Ascending aorta (tissue), 2 donors: ENCODE measurements at regions of chr1 and their contacts with region 1.

Region 1: GRCh38 chr1:16155532-16156410 is at the start of gene EPHA2:
- DNase-seq: peak; percentile 71 to 96
- H3K4me3 ChIP-seq: peak within 1 kb of the TSS; percentile 75 to 90
- H3K27ac ChIP-seq: peak within 1 kb of the TSS; percentile 84 to 91
- H3K4me1 ChIP-seq: peaks cover 12 to 41% of the 10 kb centered on the region in 2 donors
- H3K27me3 ChIP-seq: no peaks in the 10 kb centered on the region
- CTCF ChIP-seq: peak in 1 of 3 experiments; percentile 4
- total RNA-seq, gene EPHA2: 42.7 TPM

Region 2: DNA sequence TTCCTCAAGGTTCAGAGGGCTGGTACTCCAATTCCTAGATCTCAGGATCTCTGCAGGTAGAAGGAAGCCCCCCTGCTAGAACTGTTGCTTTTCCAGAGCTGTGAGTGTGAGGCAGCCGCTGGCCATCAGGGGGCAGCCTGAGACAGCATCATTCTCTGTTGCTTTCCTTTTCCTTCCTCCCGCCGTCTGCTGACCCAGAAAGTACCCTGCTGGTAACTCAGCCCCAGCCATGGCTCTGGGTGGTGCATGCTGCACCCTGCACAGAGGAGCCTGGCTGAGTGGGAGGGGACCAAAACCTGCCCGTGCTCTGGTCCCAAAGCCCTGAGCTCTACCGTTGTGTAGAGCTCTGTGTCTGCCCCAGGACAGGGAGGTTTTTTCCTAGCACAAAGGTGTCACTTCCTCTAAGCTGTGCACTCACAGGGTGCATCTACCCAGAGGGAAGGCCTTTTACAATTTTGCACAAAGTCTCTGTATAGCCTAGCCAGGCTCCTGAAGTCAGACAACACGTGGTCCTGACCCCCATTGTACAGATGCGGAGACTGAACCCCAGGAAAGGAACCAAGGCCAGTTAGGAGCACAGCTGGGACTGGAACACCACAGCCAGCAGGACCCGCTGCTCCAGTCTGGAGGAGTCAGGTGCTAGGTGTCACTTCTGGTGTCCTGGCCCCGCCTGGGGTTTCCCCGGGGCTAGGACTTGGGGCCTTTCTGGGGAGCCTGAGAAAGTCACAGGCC is 76.7 kb before region 1 on chr1:
- intact Hi-C with region 1: loop called (anchors 2 kb)
- DNase-seq: peak in 1 of 2 donors; percentile 90
- H3K4me3 ChIP-seq: no peak overlapping the region
- H3K27ac ChIP-seq: peak overlapping the region in 1 of 2 donors; percentile 19
- H3K4me1 ChIP-seq: peaks cover 8 to 15% of the 10 kb centered on the region in 2 donors
- H3K27me3 ChIP-seq: no peaks in the 10 kb centered on the region
- CTCF ChIP-seq: peak; percentile 88 to 97 (median 92)

Region 3: DNA sequence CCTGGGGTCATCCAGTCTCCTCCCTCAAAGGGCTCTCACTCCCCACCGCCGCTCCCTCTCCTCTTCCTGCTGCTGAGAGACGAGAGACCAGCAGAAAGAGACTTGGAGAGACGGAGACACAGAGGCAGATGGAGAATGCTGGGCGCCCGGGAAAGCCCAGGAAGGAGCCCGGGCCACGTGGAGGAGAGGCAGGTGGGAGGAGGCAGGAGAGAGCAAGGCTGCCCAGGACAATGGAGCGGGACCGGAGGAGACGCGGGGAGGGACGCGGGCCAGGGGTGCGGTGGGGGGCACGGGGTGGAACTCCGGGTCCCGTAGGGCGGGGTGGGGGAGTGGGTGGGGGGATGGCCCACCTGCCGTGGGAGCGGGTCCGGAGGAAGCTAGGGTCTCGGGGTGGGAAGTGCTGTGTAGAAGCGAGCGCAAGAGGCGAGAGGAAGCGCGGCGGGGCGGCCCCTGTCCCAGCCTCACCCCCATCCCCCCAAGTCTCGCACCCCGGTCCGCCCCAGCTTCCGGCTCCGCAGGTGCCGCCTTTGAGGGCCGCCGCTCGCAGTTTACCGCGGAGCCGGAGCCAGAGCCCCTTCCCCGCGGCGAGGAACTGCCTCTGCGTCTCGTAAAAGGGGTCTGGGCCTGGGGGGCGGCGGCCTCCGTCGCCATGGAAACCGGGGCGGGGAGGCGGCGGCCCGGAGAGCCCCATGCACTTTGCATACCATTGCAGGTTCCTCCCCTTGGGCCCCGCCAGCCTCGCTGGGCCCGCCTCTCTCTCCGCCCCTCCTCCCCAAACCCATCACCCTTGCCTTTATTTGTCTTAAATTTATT is 11.8 kb after region 1 on chr1:
- intact Hi-C with region 1: no loop called
- DNase-seq: no peak
- H3K4me3 ChIP-seq: peak overlapping the region; percentile 48 to 66
- H3K27ac ChIP-seq: no peak overlapping the region
- H3K4me1 ChIP-seq: peaks cover 0 to 7% of the 10 kb centered on the region in 2 donors
- H3K27me3 ChIP-seq: no peaks in the 10 kb centered on the region
- CTCF ChIP-seq: no peak

Region 4: DNA sequence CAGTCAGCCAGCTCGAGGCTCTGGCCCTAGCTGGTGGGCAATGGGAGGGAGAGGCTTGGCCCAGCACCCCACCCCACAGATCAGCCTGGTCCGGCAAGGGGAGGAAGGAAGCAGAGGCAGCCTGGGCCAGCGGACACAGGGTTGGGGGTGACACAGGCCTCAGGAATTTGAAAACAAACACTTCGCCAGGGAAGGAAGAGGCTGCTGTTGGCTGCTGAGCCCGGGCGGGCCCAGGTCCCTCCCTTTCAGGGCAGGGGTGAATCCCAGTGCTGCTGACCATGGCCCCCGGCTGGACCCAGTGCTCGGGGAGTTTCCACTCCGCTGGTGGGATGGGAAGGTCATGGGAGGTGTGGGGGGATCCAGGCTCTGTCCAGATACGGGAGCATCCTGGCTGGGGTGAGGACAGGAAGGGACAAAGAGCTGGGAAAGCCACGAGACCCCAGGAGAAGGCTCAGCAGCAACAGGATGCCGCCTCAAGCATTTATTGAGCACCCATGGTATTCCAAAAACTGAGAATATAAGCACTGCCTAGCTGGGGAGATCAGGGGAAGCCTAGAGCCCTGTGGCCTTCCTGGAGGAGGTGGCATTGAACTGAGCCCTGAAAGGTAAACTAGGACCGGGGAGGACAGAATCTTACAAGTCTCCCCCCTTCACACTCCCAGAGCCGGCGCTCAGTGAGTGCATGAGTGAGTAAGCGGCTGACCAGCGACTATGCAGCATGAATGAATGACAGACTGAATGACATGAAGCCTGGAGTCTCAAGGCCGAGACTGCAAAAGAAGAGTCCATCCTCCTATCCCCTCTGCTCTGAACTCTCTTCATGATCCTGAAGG is 26.3 kb after region 1 on chr1:
- intact Hi-C with region 1: loop called (anchors 2 kb)
- DNase-seq: peak; percentile 48 to 95
- H3K4me3 ChIP-seq: no peak overlapping the region
- H3K27ac ChIP-seq: peak overlapping the region; percentile 81 to 98
- H3K4me1 ChIP-seq: peaks cover 0 to 29% of the 10 kb centered on the region in 2 donors
- H3K27me3 ChIP-seq: no peaks in the 10 kb centered on the region
- CTCF ChIP-seq: no peak